CD4-positive, alpha-beta memory T cell (primary cell): ENCODE measurements at regions of chr3 and their contacts with region 1.

Region 1: GRCh38 chr3:194250098-194251002 is 100.8 kb downstream of the CPN2 start:
- DNase-seq: no peak
- H3K4me3 ChIP-seq: no peak overlapping the region
- H3K4me3 Mint-ChIP-seq: no peak overlapping the region
- H3K27ac ChIP-seq: no peak overlapping the region
- H3K27ac Mint-ChIP-seq: no peak overlapping the region
- H3K4me1 ChIP-seq: peaks cover 4% of the 10 kb centered on the region
- H3K4me1 Mint-ChIP-seq: peaks cover 4 to 7% (median 6%) of the 10 kb centered on the region in 4 donors
- H3K27me3 ChIP-seq: no peaks in the 10 kb centered on the region
- H3K27me3 Mint-ChIP-seq: no peaks in the 10 kb centered on the region

Region 2: GRCh38 chr3:194184265-194184751 is 66.0 kb before region 1 on chr3:
- CTCF ChIA-PET with region 1: no interaction called
- POLR2A ChIA-PET with region 1: no interaction called
- intact Hi-C with region 1: no loop called
- DNase-seq: no peak
- H3K4me3 ChIP-seq: no peak overlapping the region
- H3K4me3 Mint-ChIP-seq: no peak overlapping the region
- H3K27ac ChIP-seq: no peak overlapping the region
- H3K27ac Mint-ChIP-seq: peak overlapping the region in 2 of 7 donors; percentile 12 to 30
- H3K4me1 ChIP-seq: no peaks in the 10 kb centered on the region
- H3K4me1 Mint-ChIP-seq: peaks cover 0 to 2% (median 0%) of the 10 kb centered on the region in 4 donors
- H3K27me3 ChIP-seq: no peaks in the 10 kb centered on the region
- H3K27me3 Mint-ChIP-seq: peaks cover 4 to 5% of the 10 kb centered on the region in 2 donors

Region 3: GRCh38 chr3:194200422-194201081 is 49.8 kb before region 1 on chr3:
- CTCF ChIA-PET with region 1: no interaction called
- POLR2A ChIA-PET with region 1: no interaction called
- intact Hi-C with region 1: loop called (anchors 1 kb)
- DNase-seq: no peak
- H3K4me3 ChIP-seq: no peak overlapping the region
- H3K4me3 Mint-ChIP-seq: no peak overlapping the region
- H3K27ac ChIP-seq: no peak overlapping the region
- H3K27ac Mint-ChIP-seq: no peak overlapping the region
- H3K4me1 ChIP-seq: no peaks in the 10 kb centered on the region
- H3K4me1 Mint-ChIP-seq: peaks cover 5 to 13% (median 7%) of the 10 kb centered on the region in 4 donors
- H3K27me3 ChIP-seq: peaks cover 9% of the 10 kb centered on the region
- H3K27me3 Mint-ChIP-seq: peaks cover 30 to 44% of the 10 kb centered on the region in 2 donors